ENCODE measurements at regions of chr20 and their contacts with region 1.

Region 1: GRCh38 chr20:62121776-62122631 is at the start of gene LSM14B:
- DNase-seq: peak; percentile 78
- ATAC-seq: peak; percentile 89
- H3K4me3 ChIP-seq: peak within 1 kb of the TSS; percentile 91
- H3K27ac ChIP-seq: peak within 1 kb of the TSS; percentile 80
- H3K4me1 ChIP-seq: no peaks in the 10 kb centered on the region; the same call in none of the 2 replicates
- H3K27me3 ChIP-seq: no peaks in the 10 kb centered on the region
- CTCF ChIP-seq: no peak
- EP300 ChIP-seq: no peak
- POLR2A ChIP-seq: peak; percentile 71
- RAD21 ChIP-seq: no peak
- polyA plus RNA-seq, gene LSM14B: 0.56 to 1.8 TPM

Region 2: GRCh38 chr20:61912665-61913422 is 209.2 kb before region 1 on chr20:
- CTCF ChIA-PET with region 1: no interaction called
- POLR2A ChIA-PET with region 1: interaction called, 4 read pairs
- RAD21 ChIA-PET with region 1: interaction called, 3 read pairs
- SMC1A ChIA-PET with region 1: no interaction called
- in situ Hi-C with region 1: no loop called
- intact Hi-C with region 1: loop called (anchors 5 kb)
- DNase-seq: peak; percentile 90
- ATAC-seq: peak; percentile 95
- H3K4me3 ChIP-seq: no peak overlapping the region
- H3K27ac ChIP-seq: peak overlapping the region; percentile 82
- H3K4me1 ChIP-seq: peaks cover 34% of the 10 kb centered on the region
- H3K27me3 ChIP-seq: no peaks in the 10 kb centered on the region
- CTCF ChIP-seq: no peak
- EP300 ChIP-seq: peak in 1 of 2 experiments; percentile 60; a peak in 2 of 4 replicates
- POLR2A ChIP-seq: no peak
- RAD21 ChIP-seq: no peak

Region 3: GRCh38 chr20:62065669-62066338 is 56.2 kb before region 1 on chr20 and contains the start of gene TAF4:
- CTCF ChIA-PET with region 1: interaction called, 3 read pairs
- POLR2A ChIA-PET with region 1: interaction called, 30 read pairs
- RAD21 ChIA-PET with region 1: interaction called, 17 read pairs
- SMC1A ChIA-PET with region 1: interaction called, 5 read pairs
- in situ Hi-C with region 1: loop called (anchors 5 kb)
- intact Hi-C with region 1: loop called (anchors 2 kb)
- DNase-seq: no peak
- ATAC-seq: peak; percentile 68
- H3K4me3 ChIP-seq: peak within 1 kb of the TSS; percentile 91
- H3K27ac ChIP-seq: peak within 1 kb of the TSS; percentile 5
- H3K4me1 ChIP-seq: peaks cover 9% of the 10 kb centered on the region
- H3K27me3 ChIP-seq: no peaks in the 10 kb centered on the region
- CTCF ChIP-seq: no peak
- EP300 ChIP-seq: no peak
- POLR2A ChIP-seq: peak; percentile 96
- RAD21 ChIP-seq: no peak
- polyA plus RNA-seq, gene TAF4: 0.39 to 1.0 TPM

Region 4: GRCh38 chr20:62143118-62143973 is 21.3 kb after region 1 on chr20 and contains the starts of genes PSMA7 and SS18L1:
- CTCF ChIA-PET with region 1: interaction called, 26 read pairs
- POLR2A ChIA-PET with region 1: interaction called, 8 read pairs
- RAD21 ChIA-PET with region 1: interaction called, 7 read pairs
- SMC1A ChIA-PET with region 1: interaction called, 7 read pairs
- in situ Hi-C with region 1: no loop called
- intact Hi-C with region 1: loop called (anchors 2 kb)
- DNase-seq: no peak
- ATAC-seq: peak; percentile 88
- H3K4me3 ChIP-seq: peak within 1 kb of the TSS; percentile 93
- H3K27ac ChIP-seq: peak within 1 kb of the TSS; percentile 80
- H3K4me1 ChIP-seq: peaks cover 12% of the 10 kb centered on the region
- H3K27me3 ChIP-seq: no peaks in the 10 kb centered on the region
- CTCF ChIP-seq: no peak
- EP300 ChIP-seq: no peak
- POLR2A ChIP-seq: peak; percentile 92
- RAD21 ChIP-seq: no peak
- polyA plus RNA-seq, gene PSMA7: 333 to 546 TPM
- polyA plus RNA-seq, gene SS18L1: 1.8 to 2.2 TPM

Region 5: GRCh38 chr20:62386383-62387218 is 264.6 kb after region 1 on chr20 and contains the start of gene RPS21:
- CTCF ChIA-PET with region 1: no interaction called
- POLR2A ChIA-PET with region 1: no interaction called
- RAD21 ChIA-PET with region 1: no interaction called
- SMC1A ChIA-PET with region 1: no interaction called
- in situ Hi-C with region 1: no loop called
- intact Hi-C with region 1: loop called (anchors 10 kb)
- DNase-seq: peak; percentile 54
- ATAC-seq: peak; percentile 92
- H3K4me3 ChIP-seq: peak within 1 kb of the TSS; percentile 100
- H3K27ac ChIP-seq: peak within 1 kb of the TSS; percentile 93
- H3K4me1 ChIP-seq: peaks cover 4% of the 10 kb centered on the region
- H3K27me3 ChIP-seq: no peaks in the 10 kb centered on the region
- CTCF ChIP-seq: no peak
- EP300 ChIP-seq: no peak
- POLR2A ChIP-seq: peak; percentile 94
- RAD21 ChIP-seq: no peak
- polyA plus RNA-seq, gene RPS21: 3,290 to 4,046 TPM

Measured in GM12878 (cell line).